ENCODE measurements at regions of chr16 and their contacts with region 1.

Region 1: DNA sequence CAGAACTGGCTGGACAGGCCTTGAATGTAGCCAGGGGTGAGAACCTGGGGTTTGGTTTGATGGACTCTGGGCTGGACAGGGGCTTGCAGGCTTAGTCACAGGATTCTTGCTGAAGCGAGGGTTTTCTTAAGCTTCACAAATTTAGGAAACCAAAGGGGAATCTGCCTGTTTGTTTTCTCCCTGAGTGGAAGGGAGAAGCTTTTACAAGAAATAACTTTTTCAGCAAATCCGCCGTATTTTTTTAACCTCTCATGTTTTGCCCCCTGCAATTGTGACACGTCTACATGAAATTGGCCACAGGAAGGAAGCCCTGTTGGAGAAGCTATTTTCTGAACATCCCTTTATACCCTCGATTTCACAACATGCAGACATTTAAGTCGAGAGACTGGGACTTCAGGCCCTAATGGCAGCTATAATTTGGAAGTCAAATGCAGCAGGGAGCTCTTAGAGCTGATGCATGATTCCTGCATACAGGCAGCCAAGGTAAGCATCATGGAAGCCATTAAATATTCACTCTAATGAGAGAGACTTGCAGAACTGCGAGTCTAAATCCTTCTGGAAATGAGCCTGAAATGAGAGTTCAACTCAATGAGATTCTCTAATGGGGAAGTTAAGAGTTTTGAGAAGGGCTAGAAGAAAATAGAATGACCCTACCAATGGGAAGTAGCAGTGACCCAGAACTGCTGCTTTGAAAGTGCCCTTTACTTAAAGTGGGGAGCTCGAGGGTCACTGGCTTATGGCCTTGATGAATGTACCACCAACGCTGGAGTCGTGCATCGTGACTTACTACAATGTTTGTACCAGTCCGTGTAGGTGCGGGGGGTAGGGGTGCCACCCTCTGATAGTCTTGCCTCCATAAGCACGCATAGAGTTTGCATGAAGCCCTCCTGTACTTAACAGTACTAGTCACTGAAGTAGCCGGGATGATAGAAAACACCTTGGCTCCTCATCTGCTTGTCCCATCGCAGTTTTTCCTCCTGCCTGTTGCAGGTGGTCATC is 45.1 kb upstream of the IRF8 start:
- DNase-seq: no peak
- H3K4me3 ChIP-seq: no peak overlapping the region
- H3K27ac ChIP-seq: no peak overlapping the region
- H3K4me1 ChIP-seq: no peaks in the 10 kb centered on the region
- H3K27me3 ChIP-seq: no peaks in the 10 kb centered on the region
- CTCF ChIP-seq: no peak

Region 2: GRCh38 chr16:85935974-85936760 is 82.3 kb after region 1 on chr16:
- dilution Hi-C with region 1: loop called (anchors 10 kb)
- DNase-seq: no peak
- H3K4me3 ChIP-seq: no peak overlapping the region
- H3K27ac ChIP-seq: no peak overlapping the region
- H3K4me1 ChIP-seq: no peaks in the 10 kb centered on the region
- H3K27me3 ChIP-seq: no peaks in the 10 kb centered on the region
- CTCF ChIP-seq: no peak